ENCODE measurements at regions of chr4 and their contacts with region 1.

Region 1: DNA sequence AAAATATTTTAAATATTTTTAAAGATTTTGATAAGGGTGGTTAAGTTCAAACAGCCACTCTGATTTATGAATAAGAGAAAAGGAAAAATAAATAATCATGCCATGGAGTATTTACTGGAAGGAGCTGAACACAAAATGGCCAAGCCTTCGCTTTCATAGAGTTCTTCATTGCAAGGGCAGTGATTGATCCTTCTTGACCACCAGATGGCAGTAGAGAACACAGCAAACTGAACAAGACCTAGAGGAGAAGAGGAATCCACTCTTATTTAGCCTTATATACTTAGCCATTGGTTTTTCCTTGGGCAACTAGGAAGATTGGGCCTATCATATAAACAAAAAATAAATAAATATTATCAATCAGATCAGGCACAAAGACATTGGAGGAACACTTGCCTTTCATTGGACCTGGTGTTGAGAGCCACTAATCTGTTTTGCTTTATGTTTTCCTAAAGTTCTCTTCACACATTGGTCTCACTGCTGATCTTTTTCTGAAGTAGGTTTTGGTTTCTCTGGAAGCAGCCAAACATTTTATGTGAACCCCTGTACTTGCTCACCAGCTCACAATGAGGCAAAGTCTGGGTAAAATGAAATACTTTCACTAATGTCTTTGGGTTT is 58.1 kb upstream of the PARM1 start:
- DNase-seq: peak; percentile 3
- H3K4me3 Mint-ChIP-seq: no peak overlapping the region
- H3K27ac Mint-ChIP-seq: no peak overlapping the region
- H3K4me1 Mint-ChIP-seq: no peaks in the 10 kb centered on the region
- H3K27me3 Mint-ChIP-seq: peaks cover 10% of the 10 kb centered on the region

Region 2: DNA sequence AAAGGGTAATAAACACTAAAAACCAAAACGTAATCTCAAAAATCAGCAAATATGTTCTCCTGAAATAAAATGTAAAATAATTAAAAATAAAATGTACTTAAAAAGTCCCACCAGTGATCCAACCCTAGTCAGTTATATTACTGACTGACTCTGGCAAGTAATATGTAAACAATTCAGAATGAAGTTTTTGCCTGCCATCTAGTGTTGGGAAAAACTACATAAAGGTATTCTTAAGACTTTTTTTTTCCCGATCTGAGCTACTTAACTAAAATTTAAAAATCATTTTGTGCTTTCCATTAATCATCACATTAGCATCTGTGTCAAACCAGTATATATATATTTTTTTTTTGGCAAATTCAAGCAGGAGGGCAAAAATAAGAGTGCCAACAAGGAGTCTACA is 615.3 kb after region 1 on chr4:
- intact Hi-C with region 1: loop called (anchors 5 kb)
- DNase-seq: no peak
- H3K4me3 Mint-ChIP-seq: no peak overlapping the region
- H3K27ac Mint-ChIP-seq: no peak overlapping the region
- H3K4me1 Mint-ChIP-seq: no peaks in the 10 kb centered on the region
- H3K27me3 Mint-ChIP-seq: no peaks in the 10 kb centered on the region

Region 3: GRCh38 chr4:75849461-75849860 is 974.6 kb after region 1 on chr4:
- intact Hi-C with region 1: loop called (anchors 1 kb)
- DNase-seq: no peak
- H3K4me3 Mint-ChIP-seq: no peak overlapping the region
- H3K27ac Mint-ChIP-seq: peak overlapping the region; percentile 19
- H3K4me1 Mint-ChIP-seq: peaks cover 12% of the 10 kb centered on the region
- H3K27me3 Mint-ChIP-seq: no peaks in the 10 kb centered on the region